Heart right ventricle (tissue), 16 donors: ENCODE measurements at regions of chr7 and their contacts with region 1.

Region 1: GRCh38 chr7:53642361-53642760 is 606.9 kb downstream of the POM121L12 start:
- DNase-seq: no peak
- ATAC-seq: no peak
- H3K4me3 ChIP-seq: no peak overlapping the region
- H3K27ac ChIP-seq: no peak overlapping the region
- H3K4me1 ChIP-seq: no peaks in the 10 kb centered on the region
- H3K27me3 ChIP-seq: no peaks in the 10 kb centered on the region
- CTCF ChIP-seq: no peak

Region 2: DNA sequence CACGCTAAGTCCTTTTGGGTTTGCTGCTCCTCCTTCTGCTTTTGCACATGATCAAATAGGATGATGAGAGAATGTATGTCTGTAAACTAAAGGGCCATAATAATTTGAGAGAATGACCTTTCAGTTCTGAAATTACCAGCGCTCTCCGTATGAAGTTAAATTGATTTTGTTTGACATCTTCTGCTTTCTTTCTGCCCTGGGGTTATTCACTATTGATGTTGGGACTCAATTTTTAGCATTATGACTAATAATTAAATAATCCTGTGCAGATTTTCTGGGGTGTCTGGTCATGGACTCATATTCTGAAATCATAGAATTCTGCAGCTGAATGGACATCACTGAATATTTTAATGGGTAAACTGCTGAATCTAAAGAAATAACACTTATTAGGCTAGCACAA is 183.7 kb before region 1 on chr7:
- intact Hi-C with region 1: no loop called
- DNase-seq: no peak
- ATAC-seq: no peak
- H3K4me3 ChIP-seq: no peak overlapping the region
- H3K27ac ChIP-seq: no peak overlapping the region
- H3K4me1 ChIP-seq: no peaks in the 10 kb centered on the region
- H3K27me3 ChIP-seq: no peaks in the 10 kb centered on the region
- CTCF ChIP-seq: no peak

Region 3: DNA sequence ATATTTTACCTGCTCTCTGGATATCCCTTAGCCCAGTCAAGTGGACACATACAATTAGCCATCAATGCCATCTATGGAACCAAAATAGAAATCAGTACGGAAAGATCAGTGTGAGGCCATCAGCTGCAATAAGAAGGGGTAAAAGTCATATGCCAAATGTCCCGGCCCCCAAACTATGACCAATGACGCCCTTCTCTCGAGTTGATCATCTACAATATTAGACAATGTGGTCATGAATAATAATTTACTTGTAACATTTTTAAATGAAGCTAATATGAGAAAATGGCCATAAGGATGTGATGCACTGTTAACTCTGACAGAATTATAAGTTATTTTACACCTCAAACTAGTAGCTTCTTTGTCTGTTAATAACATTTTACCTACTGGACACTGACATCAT is 18.0 kb before region 1 on chr7:
- intact Hi-C with region 1: loop called in 1 of 10 experiments (anchors 1 kb)
- DNase-seq: no peak
- ATAC-seq: no peak
- H3K4me3 ChIP-seq: no peak overlapping the region
- H3K27ac ChIP-seq: no peak overlapping the region
- H3K4me1 ChIP-seq: no peaks in the 10 kb centered on the region
- H3K27me3 ChIP-seq: no peaks in the 10 kb centered on the region
- CTCF ChIP-seq: no peak

Region 4: DNA sequence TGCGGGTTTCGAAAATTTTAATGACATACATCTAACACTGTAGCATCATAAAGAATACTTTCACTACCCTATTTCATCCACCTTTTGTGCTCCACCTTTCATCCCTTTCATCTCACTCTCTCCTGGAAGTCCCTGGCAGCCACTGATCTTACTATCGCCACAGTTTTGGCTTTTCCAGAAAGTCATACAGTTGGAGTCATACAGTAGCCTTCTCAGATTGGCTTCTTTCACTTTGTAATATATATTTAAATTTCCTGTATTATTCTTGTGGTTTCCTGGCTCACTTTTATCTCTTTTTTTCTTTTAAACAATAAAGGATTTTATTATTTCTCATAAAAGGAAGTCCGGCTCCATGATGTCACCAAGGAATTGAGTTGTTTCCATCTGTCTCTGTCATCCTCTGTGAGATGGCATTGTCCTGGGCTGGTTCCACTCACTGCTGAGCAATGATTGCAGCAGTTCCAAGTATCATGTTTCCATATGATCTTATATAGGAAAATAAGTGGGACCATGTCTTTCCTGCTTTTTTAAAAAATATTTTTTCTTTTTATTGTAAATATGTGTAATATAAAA is 19.4 kb after region 1 on chr7:
- intact Hi-C with region 1: loop called in 1 of 10 experiments (anchors 1 kb)
- DNase-seq: no peak
- ATAC-seq: no peak
- H3K4me3 ChIP-seq: no peak overlapping the region
- H3K27ac ChIP-seq: no peak overlapping the region
- H3K4me1 ChIP-seq: no peaks in the 10 kb centered on the region
- H3K27me3 ChIP-seq: no peaks in the 10 kb centered on the region
- CTCF ChIP-seq: no peak